WTC11 (cell line): ENCODE measurements at regions of chr19 and their contacts with region 1.

Region 1: DNA sequence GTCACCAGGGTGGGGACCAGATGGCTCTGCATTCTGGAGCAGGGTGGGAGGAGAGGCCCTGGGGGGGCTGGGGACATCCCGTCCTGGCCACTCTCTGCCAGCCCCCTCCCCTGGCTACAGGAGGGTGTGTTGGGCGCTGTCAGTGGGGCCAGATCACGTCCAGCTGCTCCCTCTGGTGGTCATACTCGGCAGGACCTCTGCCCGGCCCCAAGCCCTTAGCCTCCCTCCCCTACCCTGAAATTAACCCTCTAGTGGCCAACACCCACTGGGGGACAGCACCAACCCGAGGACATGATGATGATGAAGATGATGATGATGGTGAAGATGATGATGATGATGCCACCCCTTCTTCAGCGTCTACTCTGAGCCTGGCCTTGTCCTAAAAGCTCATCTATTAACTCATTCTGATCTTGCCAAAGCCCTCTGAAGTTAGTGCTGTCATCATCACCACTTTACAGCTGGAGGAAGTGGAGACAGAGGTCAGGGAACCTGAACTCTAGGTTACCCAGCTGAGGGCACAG is 590 bp upstream of the LGI4 start:
- DNase-seq: peak; percentile 88
- ATAC-seq: peak; percentile 91
- H3K4me3 Mint-ChIP-seq: peak overlapping the region; percentile 10; the same call in 1 of the 2 replicates
- H3K27ac Mint-ChIP-seq: no peak overlapping the region
- H3K4me1 Mint-ChIP-seq: peaks cover 21% of the 10 kb centered on the region
- H3K27me3 Mint-ChIP-seq: peaks cover 9% of the 10 kb centered on the region
- CTCF ChIP-seq: peak; percentile 93

Region 2: DNA sequence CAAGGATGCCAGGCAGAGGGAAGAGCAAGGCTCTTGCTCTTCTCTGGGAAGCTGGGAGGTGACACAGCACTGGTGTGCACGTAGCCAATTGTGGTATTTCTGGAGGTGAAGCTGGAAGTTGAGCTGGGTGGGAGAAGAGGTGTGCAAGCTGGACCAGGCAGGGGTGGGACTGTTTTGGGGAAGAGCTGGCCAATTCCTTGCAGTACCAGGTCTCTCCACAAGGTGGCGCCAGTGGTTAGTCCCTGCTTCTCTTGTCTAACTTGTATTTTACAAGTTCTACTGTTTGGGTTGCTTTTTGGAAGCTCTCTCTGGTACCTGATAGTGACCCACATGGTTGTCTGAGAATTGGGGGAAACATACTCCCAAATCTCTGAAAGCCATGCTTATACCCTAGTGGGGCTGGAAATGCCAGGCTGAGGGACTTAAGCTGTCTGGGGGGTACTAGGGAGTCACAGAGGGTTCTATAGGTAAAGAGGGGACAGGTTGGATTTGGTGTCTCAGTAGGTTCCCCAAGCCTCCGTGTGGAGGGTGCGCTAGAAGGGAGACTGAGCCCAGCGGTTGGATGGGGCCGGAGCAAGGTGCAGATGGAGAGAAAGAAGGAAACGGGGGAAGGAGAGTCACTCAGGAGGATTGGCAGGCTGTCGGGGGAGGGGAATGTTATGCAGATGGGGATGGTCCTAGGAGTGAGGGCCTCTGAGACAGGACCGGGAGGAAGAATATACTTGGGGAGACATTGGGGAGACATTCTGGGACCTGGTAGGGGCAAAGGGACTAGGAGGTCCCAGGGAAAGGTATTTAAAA is 90.9 kb before region 1 on chr19:
- CTCF ChIA-PET with region 1: interaction called, 19 read pairs
- POLR2A ChIA-PET with region 1: no interaction called
- DNase-seq: peak; percentile 83
- ATAC-seq: no peak
- H3K4me3 Mint-ChIP-seq: no peak overlapping the region; the same call in 1 of the 2 replicates
- H3K27ac Mint-ChIP-seq: peak overlapping the region; percentile 15; the same call in 1 of the 2 replicates
- H3K4me1 Mint-ChIP-seq: peaks cover 50% of the 10 kb centered on the region
- H3K27me3 Mint-ChIP-seq: no peaks in the 10 kb centered on the region
- CTCF ChIP-seq: peak; percentile 99

Region 3: DNA sequence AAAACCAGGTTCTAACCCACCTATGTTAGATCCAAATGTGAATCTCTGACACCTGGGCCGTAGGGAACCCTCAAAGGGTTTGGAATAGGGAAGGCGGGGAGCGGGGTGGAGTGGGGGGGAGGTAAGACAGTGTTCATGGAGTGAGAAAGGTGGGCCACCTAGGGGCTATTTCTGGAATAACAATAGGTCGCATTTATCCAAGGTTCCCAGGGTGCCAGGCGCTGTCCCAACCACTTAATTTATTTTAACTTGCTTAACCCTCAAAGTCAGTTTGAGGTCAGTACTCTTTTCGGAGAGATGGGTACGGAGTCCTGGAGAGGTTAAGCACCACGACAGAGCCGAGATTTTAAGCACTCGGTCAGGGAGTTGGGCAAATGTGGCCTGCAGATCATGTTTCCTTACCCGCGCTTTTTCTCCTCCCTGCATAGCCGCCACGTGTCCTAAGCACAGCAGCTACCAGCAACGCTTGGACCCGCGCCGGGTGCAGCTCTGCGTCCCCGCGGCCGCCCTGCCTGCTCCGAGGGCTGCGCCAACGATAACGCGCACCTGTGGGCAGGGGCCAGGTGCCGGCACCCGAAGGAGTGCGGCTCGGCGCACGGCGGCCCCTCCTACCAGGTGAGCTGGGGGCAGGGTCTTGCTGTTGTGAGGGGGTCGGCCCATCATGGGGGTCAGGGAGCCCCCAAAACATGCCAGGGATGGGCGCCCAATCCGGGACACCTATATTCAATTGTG is 44.8 kb before region 1 on chr19:
- CTCF ChIA-PET with region 1: interaction called, 15 read pairs
- POLR2A ChIA-PET with region 1: no interaction called
- DNase-seq: peak; percentile 72
- ATAC-seq: peak; percentile 87
- H3K4me3 Mint-ChIP-seq: peak overlapping the region; percentile 55
- H3K27ac Mint-ChIP-seq: no peak overlapping the region
- H3K4me1 Mint-ChIP-seq: peaks cover 15% of the 10 kb centered on the region
- H3K27me3 Mint-ChIP-seq: peaks cover 5% of the 10 kb centered on the region
- CTCF ChIP-seq: peak; percentile 74

Region 4: DNA sequence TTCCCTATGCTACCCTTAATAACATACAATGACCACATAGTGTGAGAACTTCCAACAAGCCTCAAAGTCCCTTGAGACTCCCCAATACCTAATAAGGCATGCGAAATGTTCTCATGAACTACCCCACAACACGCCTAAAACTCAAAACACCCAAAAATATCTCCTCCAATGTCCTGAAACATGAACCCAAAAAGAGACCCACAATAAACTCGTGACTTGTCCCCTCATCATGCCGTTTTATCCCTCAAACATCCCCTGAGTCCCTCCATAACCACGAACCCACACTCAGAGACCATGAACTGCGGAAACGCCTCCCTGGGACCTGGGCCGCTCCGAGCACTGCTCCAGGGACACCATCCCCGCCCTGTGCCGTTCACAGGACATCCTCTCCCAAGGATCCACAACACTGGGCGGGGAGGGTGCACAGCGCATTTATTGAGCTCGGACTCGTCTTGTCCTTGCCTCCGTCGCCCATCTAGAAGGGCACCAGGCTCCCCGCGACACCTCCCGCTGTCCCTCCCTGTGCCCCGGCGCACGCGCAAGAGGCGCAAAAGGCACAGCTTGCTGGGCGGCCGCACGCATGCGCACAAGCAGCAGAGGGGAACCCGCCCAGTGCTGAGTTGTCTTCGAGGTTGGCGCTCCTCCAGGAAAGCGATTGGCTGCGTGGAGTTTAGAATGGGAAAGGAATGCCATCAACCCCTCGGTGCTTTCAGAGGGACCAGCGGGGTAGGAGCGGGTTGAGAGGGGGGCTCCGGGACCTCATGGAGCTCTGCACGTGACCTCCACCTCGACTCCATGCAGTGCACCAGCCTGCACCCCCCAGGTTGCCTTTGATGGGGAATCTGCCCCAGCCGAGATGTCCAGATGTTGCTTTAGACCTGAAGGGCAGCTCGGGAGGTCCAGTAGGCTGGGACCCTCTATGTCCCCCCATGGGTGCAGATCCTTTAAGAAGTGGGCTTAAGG is 11.1 kb before region 1 on chr19:
- CTCF ChIA-PET with region 1: interaction called, 12 read pairs
- POLR2A ChIA-PET with region 1: no interaction called
- DNase-seq: peak; percentile 75
- ATAC-seq: peak; percentile 63
- H3K4me3 Mint-ChIP-seq: peak overlapping the region; percentile 40
- H3K27ac Mint-ChIP-seq: peak overlapping the region; percentile 41; the same call in 1 of the 2 replicates
- H3K4me1 Mint-ChIP-seq: peaks cover 31% of the 10 kb centered on the region
- H3K27me3 Mint-ChIP-seq: peaks cover 4% of the 10 kb centered on the region
- CTCF ChIP-seq: no peak

Region 5: GRCh38 chr19:35224681-35225571 is 89.5 kb after region 1 on chr19:
- CTCF ChIA-PET with region 1: interaction called, 10 read pairs
- POLR2A ChIA-PET with region 1: no interaction called
- DNase-seq: peak; percentile 70
- ATAC-seq: peak; percentile 84
- H3K4me3 Mint-ChIP-seq: peak overlapping the region; percentile 40
- H3K27ac Mint-ChIP-seq: no peak overlapping the region
- H3K4me1 Mint-ChIP-seq: peaks cover 21% of the 10 kb centered on the region
- H3K27me3 Mint-ChIP-seq: peaks cover 8% of the 10 kb centered on the region
- CTCF ChIP-seq: peak; percentile 23; the same call in 1 of the 2 replicates